ENCODE measurements at regions of chr10 and their contacts with region 1.

Region 1: DNA sequence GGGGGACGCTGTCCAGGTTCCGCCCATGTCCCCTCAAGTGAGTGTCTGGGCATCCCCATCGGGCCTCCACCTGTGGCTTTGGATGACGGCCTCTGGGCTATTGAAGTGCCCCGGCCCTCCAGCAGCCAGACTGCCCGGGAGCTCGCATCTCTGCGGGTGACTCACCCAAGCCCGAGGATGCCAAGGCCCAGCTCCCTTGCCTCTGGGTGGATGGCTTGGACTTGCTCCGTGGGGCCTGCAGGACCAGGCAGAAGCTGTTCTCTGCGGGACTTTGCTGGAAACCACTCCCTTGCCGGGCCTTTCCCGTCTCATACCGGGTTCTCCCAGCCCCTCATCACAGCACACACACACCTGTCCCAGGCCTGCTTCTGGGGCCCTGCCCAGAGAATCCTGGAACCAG is 22.4 kb downstream of the DPYSL4 start:
- DNase-seq: no peak
- ATAC-seq: no peak
- H3K4me3 ChIP-seq: no peak overlapping the region
- H3K4me3 Mint-ChIP-seq: no peak overlapping the region
- H3K27ac ChIP-seq: no peak overlapping the region
- H3K27ac Mint-ChIP-seq: no peak overlapping the region
- H3K4me1 ChIP-seq: no peaks in the 10 kb centered on the region
- H3K4me1 Mint-ChIP-seq: peaks cover 0 to 2% (median 0%) of the 10 kb centered on the region in 7 donors
- H3K27me3 ChIP-seq: no peaks in the 10 kb centered on the region
- H3K27me3 Mint-ChIP-seq: no peaks in the 10 kb centered on the region

Region 2: DNA sequence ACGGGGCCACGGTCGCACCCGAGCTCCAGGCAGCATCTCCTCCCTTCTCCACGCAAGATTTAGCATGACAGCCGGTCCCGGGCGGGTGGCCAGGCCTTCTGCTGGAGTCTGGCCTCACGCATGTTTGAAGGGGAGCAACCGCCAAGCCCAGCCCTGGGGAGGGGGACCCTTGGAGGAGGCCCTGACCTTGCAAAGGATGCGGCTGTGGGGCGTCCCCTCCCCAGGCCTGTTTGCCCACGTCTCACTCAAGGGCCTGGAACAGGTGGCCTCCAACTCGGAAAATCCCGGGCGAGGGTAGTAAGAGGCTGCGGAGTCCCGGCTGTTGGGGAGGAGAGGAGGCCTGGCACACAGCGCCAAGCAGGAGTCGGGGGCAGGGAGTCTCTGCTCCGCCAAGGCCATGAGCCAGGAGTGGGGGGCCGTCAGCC is 73.0 kb before region 1 on chr10:
- CTCF ChIA-PET with region 1: no interaction called
- POLR2A ChIA-PET with region 1: no interaction called
- intact Hi-C with region 1: loop called in 1 of 2 experiments (anchors 2 kb)
- DNase-seq: no peak
- ATAC-seq: no peak
- H3K4me3 ChIP-seq: no peak overlapping the region
- H3K4me3 Mint-ChIP-seq: no peak overlapping the region
- H3K27ac ChIP-seq: no peak overlapping the region
- H3K27ac Mint-ChIP-seq: no peak overlapping the region
- H3K4me1 ChIP-seq: no peaks in the 10 kb centered on the region
- H3K4me1 Mint-ChIP-seq: peaks cover 0 to 4% (median 2%) of the 10 kb centered on the region in 7 donors
- H3K27me3 ChIP-seq: no peaks in the 10 kb centered on the region
- H3K27me3 Mint-ChIP-seq: peaks cover 0 to 15% (median 5%) of the 10 kb centered on the region in 5 donors

Region 3: DNA sequence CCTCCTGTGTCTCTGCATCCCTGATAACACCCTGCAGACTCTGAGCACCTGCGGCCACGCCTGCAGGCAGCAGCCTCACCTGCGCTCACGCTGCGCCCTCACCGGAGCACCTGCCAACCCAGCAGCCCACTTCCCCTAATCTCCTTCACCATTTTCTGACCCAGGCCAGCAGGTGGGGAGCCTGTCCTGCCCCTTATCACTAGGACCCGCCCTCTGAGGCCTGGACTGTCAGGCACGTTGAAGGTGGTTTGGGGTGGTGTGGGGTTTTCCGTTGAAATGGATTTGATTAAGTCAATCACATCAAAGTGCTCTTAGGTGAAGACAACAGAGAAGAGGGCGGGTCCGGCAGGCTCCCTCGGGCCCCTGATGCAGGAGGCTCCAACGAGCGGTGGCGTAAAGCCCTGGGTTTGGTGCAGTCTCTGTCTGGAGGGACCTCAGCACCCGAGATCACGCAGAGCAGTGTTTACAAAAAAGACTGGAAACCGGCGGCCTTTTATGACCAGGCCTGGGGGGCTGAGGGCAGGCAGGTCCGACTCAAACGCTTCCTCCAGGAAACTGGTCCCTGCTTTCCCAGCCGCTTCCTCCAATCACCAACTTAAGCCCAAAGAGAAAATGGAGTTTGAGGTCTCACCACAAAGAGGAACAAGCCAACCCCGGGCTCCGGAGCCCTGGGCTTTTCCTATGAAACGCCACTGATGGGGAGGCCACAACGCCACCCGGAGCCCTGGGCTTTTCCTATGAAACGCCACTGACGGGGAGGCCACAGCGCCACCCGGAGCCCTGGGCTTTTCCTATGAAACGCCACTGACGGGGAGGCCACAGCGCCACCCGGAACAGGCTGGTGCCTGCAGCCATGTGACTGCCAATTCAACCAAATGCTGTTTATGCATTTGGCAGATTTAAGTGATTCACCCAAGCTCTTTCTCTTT is 23.2 kb after region 1 on chr10:
- CTCF ChIA-PET with region 1: no interaction called
- POLR2A ChIA-PET with region 1: no interaction called
- intact Hi-C with region 1: no loop called
- DNase-seq: peak in 3 of 9 donors; percentile 7 to 31 (median 20)
- ATAC-seq: peak; percentile 51
- H3K4me3 ChIP-seq: no peak overlapping the region
- H3K4me3 Mint-ChIP-seq: peak overlapping the region in 9 of 10 donors; percentile 22 to 70 (median 44)
- H3K27ac ChIP-seq: no peak overlapping the region
- H3K27ac Mint-ChIP-seq: peak overlapping the region in 7 of 9 donors; percentile 15 to 92 (median 83)
- H3K4me1 ChIP-seq: peaks cover 0 to 10% of the 10 kb centered on the region in 2 donors
- H3K4me1 Mint-ChIP-seq: peaks cover 22 to 48% (median 33%) of the 10 kb centered on the region in 7 donors
- H3K27me3 ChIP-seq: no peaks in the 10 kb centered on the region
- H3K27me3 Mint-ChIP-seq: no peaks in the 10 kb centered on the region

Region 4: GRCh38 chr10:132836832-132837540 is 627.9 kb after region 1 on chr10:
- CTCF ChIA-PET with region 1: no interaction called
- POLR2A ChIA-PET with region 1: no interaction called
- intact Hi-C with region 1: no loop called
- DNase-seq: peak in 7 of 9 donors; percentile 40 to 67 (median 51)
- ATAC-seq: peak; percentile 58
- H3K4me3 ChIP-seq: no peak overlapping the region
- H3K4me3 Mint-ChIP-seq: no peak overlapping the region
- H3K27ac ChIP-seq: no peak overlapping the region
- H3K27ac Mint-ChIP-seq: no peak overlapping the region
- H3K4me1 ChIP-seq: no peaks in the 10 kb centered on the region
- H3K4me1 Mint-ChIP-seq: no peaks in the 10 kb centered on the region
- H3K27me3 ChIP-seq: no peaks in the 10 kb centered on the region
- H3K27me3 Mint-ChIP-seq: peaks cover 0 to 9% (median 2%) of the 10 kb centered on the region in 5 donors